Right cardiac atrium (tissue), 5 donors: ENCODE measurements at regions of chr2 and their contacts with region 1.

Region 1: GRCh38 chr2:69816923-69817542 is 12.4 kb upstream of the GMCL1 start:
- DNase-seq: peak in 2 of 3 donors; percentile 59 to 72
- ATAC-seq: peak; percentile 60 to 68
- H3K4me3 ChIP-seq: no peak overlapping the region
- H3K27ac ChIP-seq: no peak overlapping the region
- H3K4me1 ChIP-seq: no peaks in the 10 kb centered on the region
- H3K27me3 ChIP-seq: no peaks in the 10 kb centered on the region

Region 2: GRCh38 chr2:69559442-69560146 is 257.4 kb before region 1 on chr2:
- intact Hi-C with region 1: loop called in 1 of 4 experiments (anchors 10 kb)
- DNase-seq: no peak
- ATAC-seq: peak; percentile 73 to 77
- H3K4me3 ChIP-seq: no peak overlapping the region
- H3K27ac ChIP-seq: no peak overlapping the region
- H3K4me1 ChIP-seq: peaks cover 6% of the 10 kb centered on the region
- H3K27me3 ChIP-seq: no peaks in the 10 kb centered on the region

Region 3: GRCh38 chr2:69724540-69725159 is 92.4 kb before region 1 on chr2:
- intact Hi-C with region 1: loop called (anchors 1 to 5 kb)
- DNase-seq: peak; percentile 79 to 95 (median 87)
- ATAC-seq: peak; percentile 85 to 91
- H3K4me3 ChIP-seq: peak overlapping the region; percentile 44
- H3K27ac ChIP-seq: no peak overlapping the region
- H3K4me1 ChIP-seq: no peaks in the 10 kb centered on the region
- H3K27me3 ChIP-seq: no peaks in the 10 kb centered on the region